A549 (cell line): ENCODE measurements at regions of chr4 and their contacts with region 1.

Region 1: GRCh38 chr4:5998333-5998936 is 19.8 kb downstream of the C4orf50 start:
- DNase-seq: peak; percentile 61 to 64
- ATAC-seq: peak; percentile 86 to 95
- H3K4me3 ChIP-seq: no peak overlapping the region
- H3K27ac ChIP-seq: no peak overlapping the region
- H3K4me1 ChIP-seq: no peaks in the 10 kb centered on the region
- CTCF ChIP-seq: peak; percentile 91
- EP300 ChIP-seq: no peak
- POLR2A ChIP-seq: no peak
- RAD21 ChIP-seq: peak; percentile 79 to 82

Region 2: DNA sequence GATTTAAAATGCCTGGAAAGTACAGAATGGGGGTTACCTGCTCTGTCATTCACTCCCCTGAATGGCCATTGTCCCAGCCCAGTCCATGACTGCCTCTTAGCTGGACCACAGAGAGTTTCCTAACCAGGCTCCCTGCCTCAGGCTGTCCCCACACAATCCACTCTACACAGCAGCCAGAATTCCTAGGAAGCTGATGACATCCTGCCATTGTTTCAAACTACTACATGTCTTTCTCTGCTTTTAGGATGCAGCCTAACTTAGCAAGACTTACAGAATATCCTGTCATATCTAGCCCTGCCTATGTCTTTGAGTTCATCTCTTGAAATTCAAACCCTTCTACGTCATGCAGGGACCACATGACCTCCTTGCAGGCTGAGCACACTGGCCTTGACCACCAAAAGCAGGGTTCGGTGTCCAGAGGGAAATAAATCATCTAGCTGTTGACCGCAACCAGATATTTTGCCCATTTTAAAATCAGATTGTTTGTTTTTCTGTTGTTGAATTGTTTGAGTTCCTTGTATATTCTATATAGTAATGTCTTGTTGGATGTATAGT is 89.5 kb before region 1 on chr4:
- CTCF ChIA-PET with region 1: no interaction called
- POLR2A ChIA-PET with region 1: no interaction called
- DNase-seq: no peak
- ATAC-seq: no peak
- H3K4me3 ChIP-seq: no peak overlapping the region
- H3K27ac ChIP-seq: no peak overlapping the region
- H3K4me1 ChIP-seq: no peaks in the 10 kb centered on the region
- CTCF ChIP-seq: no peak
- EP300 ChIP-seq: no peak
- POLR2A ChIP-seq: no peak
- RAD21 ChIP-seq: no peak

Region 3: GRCh38 chr4:5979976-5980375 is 18.5 kb before region 1 on chr4:
- CTCF ChIA-PET with region 1: interaction called, 20 read pairs
- POLR2A ChIA-PET with region 1: no interaction called
- DNase-seq: peak; percentile 33 to 37
- ATAC-seq: peak; percentile 85 to 91; a peak in 4 of 6 replicates
- H3K4me3 ChIP-seq: no peak overlapping the region
- H3K27ac ChIP-seq: no peak overlapping the region
- H3K4me1 ChIP-seq: no peaks in the 10 kb centered on the region
- CTCF ChIP-seq: peak; percentile 23; the same call in 2 of the 3 replicates
- EP300 ChIP-seq: no peak
- POLR2A ChIP-seq: no peak
- RAD21 ChIP-seq: peak; percentile 51 to 69; a peak in 4 of 5 replicates

Region 4: GRCh38 chr4:6011686-6012085 is 13.3 kb after region 1 on chr4:
- CTCF ChIA-PET with region 1: interaction called, 35 read pairs
- POLR2A ChIA-PET with region 1: no interaction called
- DNase-seq: no peak
- ATAC-seq: no peak
- H3K4me3 ChIP-seq: no peak overlapping the region
- H3K27ac ChIP-seq: no peak overlapping the region
- H3K4me1 ChIP-seq: no peaks in the 10 kb centered on the region
- CTCF ChIP-seq: no peak
- EP300 ChIP-seq: no peak
- POLR2A ChIP-seq: no peak
- RAD21 ChIP-seq: no peak

Region 5: DNA sequence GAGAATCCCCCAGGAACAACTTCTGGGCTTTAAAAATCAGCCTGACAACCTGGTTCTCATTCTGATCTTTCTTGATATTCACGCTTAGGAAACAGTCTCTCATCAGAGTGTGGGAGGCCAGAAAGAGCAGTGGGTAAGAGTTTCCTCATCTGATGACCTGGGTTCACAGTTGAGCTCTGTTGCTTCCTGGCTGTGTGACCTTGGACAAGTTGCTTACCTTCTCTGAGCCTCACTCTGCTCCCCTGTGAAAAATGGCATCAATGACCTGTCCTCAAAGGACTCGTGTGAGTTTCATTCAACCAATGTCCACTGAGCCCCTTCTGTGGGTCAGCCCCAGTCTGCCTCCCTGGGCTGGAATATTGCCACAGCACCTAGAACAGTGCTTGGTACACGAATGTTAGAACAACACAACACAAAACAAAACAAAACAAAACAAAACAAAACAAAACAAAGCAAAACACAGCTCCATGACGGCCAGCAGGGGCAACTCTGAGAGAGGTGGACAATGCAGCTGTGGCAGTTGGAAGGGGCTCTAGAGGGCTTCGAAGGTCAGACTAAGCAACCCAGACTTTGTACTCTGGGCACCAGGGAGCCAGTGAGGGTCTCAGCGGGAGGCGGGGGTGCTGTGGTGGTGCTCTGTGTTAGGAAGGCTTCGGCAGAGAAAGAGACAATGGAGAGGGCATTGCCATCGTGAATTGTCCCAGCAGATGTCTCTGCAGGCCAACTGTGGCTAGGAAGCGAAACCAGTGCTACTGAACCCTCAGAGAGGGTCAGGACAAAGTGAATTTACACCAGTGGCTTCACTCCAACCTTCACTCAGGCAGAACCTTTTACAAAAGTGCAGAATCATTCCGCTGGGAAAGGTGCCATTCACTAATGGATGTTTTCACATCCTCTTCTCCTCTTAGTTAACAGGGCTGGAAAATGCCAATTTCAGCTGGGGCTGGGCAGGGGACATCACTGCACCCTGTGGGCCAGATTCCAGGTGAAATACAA is 34.1 kb after region 1 on chr4:
- CTCF ChIA-PET with region 1: interaction called, 10 read pairs
- POLR2A ChIA-PET with region 1: no interaction called
- DNase-seq: peak in 1 of 2 experiments; percentile 48
- ATAC-seq: peak in 1 of 2 experiments; percentile 59; a peak in 3 of 6 replicates
- H3K4me3 ChIP-seq: no peak overlapping the region
- H3K27ac ChIP-seq: peak overlapping the region; percentile 9 to 70; a peak in 3 of 6 replicates
- H3K4me1 ChIP-seq: 0 out of 3 replicates have a peak, but pooled peaks cover 4% of the 10 kb centered on the region
- CTCF ChIP-seq: no peak
- EP300 ChIP-seq: no peak
- POLR2A ChIP-seq: no peak
- RAD21 ChIP-seq: no peak

Region 6: GRCh38 chr4:6071959-6072720 is 73.7 kb after region 1 on chr4:
- CTCF ChIA-PET with region 1: no interaction called
- POLR2A ChIA-PET with region 1: no interaction called
- DNase-seq: no peak
- ATAC-seq: no peak
- H3K4me3 ChIP-seq: no peak overlapping the region
- H3K27ac ChIP-seq: no peak overlapping the region
- H3K4me1 ChIP-seq: no peaks in the 10 kb centered on the region
- CTCF ChIP-seq: no peak
- EP300 ChIP-seq: no peak
- POLR2A ChIP-seq: no peak
- RAD21 ChIP-seq: no peak

Region 7: GRCh38 chr4:6327041-6327917 is 328.8 kb after region 1 on chr4:
- CTCF ChIA-PET with region 1: interaction called, 36 read pairs
- POLR2A ChIA-PET with region 1: no interaction called
- DNase-seq: peak; percentile 49 to 65
- ATAC-seq: peak; percentile 60 to 89
- H3K4me3 ChIP-seq: no peak overlapping the region
- H3K27ac ChIP-seq: no peak overlapping the region
- H3K4me1 ChIP-seq: no peaks in the 10 kb centered on the region
- CTCF ChIP-seq: peak; percentile 72
- EP300 ChIP-seq: no peak
- POLR2A ChIP-seq: no peak
- RAD21 ChIP-seq: peak; percentile 82